IMR-90 (cell line): ENCODE measurements at regions of chr2 and their contacts with region 1.

Region 1: DNA sequence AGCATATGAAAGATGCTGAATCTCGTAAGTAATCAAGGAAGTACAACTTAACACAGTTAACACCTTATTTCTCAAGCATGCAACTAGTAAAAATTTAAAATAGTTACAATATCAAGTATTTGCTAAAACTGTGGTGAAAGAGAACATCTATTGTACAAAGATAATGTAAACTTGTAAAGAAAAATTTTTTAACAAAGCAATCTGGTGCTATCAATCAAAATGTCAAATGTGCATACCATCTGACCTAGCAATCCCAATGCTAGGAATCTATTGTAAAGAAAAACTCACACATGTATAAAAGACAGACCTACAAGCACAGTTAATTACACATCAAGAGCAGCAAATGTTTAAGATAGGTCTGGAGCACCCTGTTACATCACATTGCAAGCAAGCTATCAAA is 90.1 kb downstream of the SLC66A3 start:
- DNase-seq: no peak
- ATAC-seq: no peak
- H3K4me3 ChIP-seq: no peak overlapping the region
- H3K27ac ChIP-seq: no peak overlapping the region
- H3K4me1 ChIP-seq: peaks cover 3% of the 10 kb centered on the region; the same call in 1 of the 2 replicates
- H3K27me3 ChIP-seq: no peaks in the 10 kb centered on the region
- CTCF ChIP-seq: no peak
- POLR2A ChIP-seq: no peak
- RAD21 ChIP-seq: no peak

Region 2: GRCh38 chr2:11187083-11187619 is 58.2 kb before region 1 on chr2:
- CTCF ChIA-PET with region 1: no interaction called
- POLR2A ChIA-PET with region 1: no interaction called
- dilution Hi-C with region 1: no loop called
- in situ Hi-C with region 1: no loop called
- intact Hi-C with region 1: no loop called
- DNase-seq: peak; percentile 77
- ATAC-seq: peak; percentile 77
- H3K4me3 ChIP-seq: no peak overlapping the region
- H3K27ac ChIP-seq: no peak overlapping the region
- H3K4me1 ChIP-seq: peaks cover 2% of the 10 kb centered on the region; the same call in 1 of the 2 replicates
- H3K27me3 ChIP-seq: no peaks in the 10 kb centered on the region
- CTCF ChIP-seq: no peak
- POLR2A ChIP-seq: no peak
- RAD21 ChIP-seq: no peak

Region 3: DNA sequence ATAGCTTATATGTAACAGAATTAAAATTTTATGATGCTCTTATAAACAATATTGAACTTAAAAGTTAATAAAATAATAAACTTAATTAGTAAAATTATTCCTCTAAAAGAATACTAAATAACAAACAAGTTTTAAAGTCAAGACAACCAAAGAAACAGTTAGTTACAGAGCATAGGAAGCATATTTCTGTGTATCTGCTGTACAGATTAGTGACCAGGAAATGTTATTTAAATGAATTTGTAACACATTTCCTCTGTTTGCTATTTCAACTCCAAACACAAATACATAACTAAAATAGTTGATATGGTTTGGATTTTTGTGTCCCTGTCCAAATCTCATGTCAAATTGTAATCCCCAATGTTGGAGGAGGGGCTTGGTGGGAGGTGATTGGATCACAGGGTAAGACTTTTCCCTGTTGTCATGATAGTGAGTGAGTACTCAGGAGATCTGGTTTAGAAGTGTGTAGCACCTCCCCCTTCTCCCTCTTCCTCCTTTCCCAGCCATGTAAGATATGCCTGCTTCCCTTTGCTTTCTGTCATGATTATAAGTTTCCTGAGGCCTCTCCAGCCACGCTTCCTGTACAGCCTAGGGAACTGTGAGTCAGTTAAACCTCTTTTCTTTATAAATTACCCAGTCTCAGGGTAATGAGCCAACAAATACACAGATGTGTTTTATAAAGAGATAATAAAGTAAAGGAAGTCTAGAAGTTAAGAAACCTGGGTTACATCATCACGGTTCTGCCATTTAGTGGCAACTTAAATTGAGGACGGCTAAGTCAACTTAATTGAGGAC is 47.3 kb after region 1 on chr2:
- CTCF ChIA-PET with region 1: no interaction called
- POLR2A ChIA-PET with region 1: no interaction called
- dilution Hi-C with region 1: no loop called
- in situ Hi-C with region 1: no loop called
- intact Hi-C with region 1: loop called (anchors 5 kb)
- DNase-seq: peak; percentile 23
- ATAC-seq: peak; percentile 68
- H3K4me3 ChIP-seq: no peak overlapping the region
- H3K27ac ChIP-seq: no peak overlapping the region
- H3K4me1 ChIP-seq: no peaks in the 10 kb centered on the region
- H3K27me3 ChIP-seq: no peaks in the 10 kb centered on the region
- CTCF ChIP-seq: no peak
- POLR2A ChIP-seq: no peak
- RAD21 ChIP-seq: no peak

Region 4: DNA sequence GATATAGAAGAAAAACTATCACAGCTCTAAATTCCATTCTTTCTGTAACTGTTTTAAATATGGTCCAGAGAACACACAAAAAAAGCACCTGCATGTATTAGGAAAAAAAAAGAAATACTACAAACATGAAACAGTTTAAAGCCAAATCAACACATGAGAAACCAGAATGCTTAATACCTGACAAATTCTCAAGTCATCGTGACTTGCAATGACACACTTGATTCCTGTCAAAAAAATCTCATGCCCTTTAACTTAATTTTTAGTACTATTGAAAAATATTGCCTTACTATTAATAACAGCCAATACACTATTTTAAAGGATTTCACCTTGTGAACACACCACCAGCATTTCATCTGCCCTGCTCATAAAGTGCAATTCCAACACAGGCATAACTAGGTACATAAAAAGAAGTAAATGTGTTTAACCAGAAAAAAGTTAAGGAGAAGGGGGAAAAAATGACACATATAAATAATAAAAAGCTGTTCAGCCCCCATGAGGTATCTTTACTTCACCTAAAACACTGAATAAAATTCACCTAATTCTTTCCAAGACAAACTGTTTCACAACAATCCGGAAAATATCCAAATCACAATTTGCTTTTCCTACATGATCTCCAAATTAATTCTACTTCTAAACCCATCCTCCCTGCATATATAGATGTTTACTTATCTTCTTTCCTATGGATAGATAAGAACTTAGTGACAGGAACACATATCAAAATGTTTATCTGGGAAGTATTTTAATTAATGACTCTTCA is 88.3 kb after region 1 on chr2:
- CTCF ChIA-PET with region 1: interaction called, 5 read pairs
- POLR2A ChIA-PET with region 1: interaction called, 13 read pairs
- dilution Hi-C with region 1: no loop called
- in situ Hi-C with region 1: no loop called
- intact Hi-C with region 1: no loop called
- DNase-seq: no peak
- ATAC-seq: no peak
- H3K4me3 ChIP-seq: no peak overlapping the region
- H3K27ac ChIP-seq: no peak overlapping the region
- H3K4me1 ChIP-seq: peaks cover 2% of the 10 kb centered on the region
- H3K27me3 ChIP-seq: no peaks in the 10 kb centered on the region
- CTCF ChIP-seq: no peak
- POLR2A ChIP-seq: no peak
- RAD21 ChIP-seq: no peak